ENCODE measurements at regions of chr1 and their contacts with region 1.

Region 1: DNA sequence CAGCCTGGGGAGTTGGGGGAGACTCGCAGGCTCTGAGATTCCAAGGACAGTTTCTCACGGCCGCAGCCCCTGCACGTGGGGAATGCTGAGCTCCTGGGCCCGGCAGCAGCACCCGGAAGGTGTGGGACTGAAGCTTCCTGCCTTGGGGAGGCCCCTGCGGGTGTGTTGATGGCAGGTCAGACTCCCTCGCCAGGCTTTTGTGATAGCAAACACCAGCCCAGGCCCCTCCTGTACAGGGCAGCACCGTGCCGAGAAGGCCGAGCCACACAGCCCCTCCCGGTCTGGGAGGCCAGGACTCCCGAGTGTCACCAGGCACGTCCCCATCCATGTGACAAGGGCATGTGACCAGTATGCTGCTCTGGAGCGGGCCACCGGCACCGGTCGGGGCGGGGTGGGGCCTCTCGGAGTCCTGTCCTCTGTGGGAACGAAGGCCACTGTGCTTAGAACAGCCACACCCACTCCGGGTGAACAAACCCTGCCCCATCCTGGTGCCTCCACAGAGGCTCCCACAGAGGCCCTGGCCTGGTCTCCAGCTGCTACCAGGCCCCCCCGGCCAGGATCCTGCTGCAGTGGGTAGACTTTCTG is 31.1 kb upstream of the ARHGEF16 start:
- DNase-seq: peak; percentile 3
- H3K4me3 Mint-ChIP-seq: no peak overlapping the region
- H3K27ac Mint-ChIP-seq: no peak overlapping the region
- H3K4me1 Mint-ChIP-seq: no peaks in the 10 kb centered on the region
- H3K27me3 Mint-ChIP-seq: peaks cover 48% of the 10 kb centered on the region
- CTCF ChIP-seq: no peak

Region 2: GRCh38 chr1:3012456-3013291 is 410.7 kb before region 1 on chr1:
- CTCF ChIA-PET with region 1: no interaction called
- intact Hi-C with region 1: loop called (anchors 5 kb)
- DNase-seq: peak; percentile 55
- H3K4me3 Mint-ChIP-seq: no peak overlapping the region
- H3K27ac Mint-ChIP-seq: no peak overlapping the region
- H3K4me1 Mint-ChIP-seq: no peaks in the 10 kb centered on the region
- H3K27me3 Mint-ChIP-seq: peaks cover 51% of the 10 kb centered on the region
- CTCF ChIP-seq: peak; percentile 45

Region 3: DNA sequence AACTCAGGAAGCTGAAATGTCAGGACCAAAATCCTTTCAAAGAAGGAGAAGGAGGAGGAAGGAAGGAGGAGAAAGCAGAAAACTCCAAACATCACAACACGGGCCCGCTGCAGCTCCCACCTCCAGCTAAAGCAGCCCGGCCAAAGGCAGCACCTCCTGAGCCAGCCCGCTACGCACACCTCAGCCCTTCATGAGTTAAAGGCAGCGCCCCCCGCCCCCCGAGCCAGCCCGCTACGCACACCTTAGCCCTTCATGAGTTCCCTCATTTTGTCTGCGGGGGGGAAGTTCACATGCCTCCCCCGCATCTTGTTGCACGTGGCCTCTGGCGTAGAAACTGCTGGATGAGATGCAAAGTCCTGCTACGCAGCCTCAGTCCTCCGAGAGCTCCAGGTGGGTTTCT is 59.6 kb before region 1 on chr1:
- CTCF ChIA-PET with region 1: interaction called, 11 read pairs
- intact Hi-C with region 1: no loop called
- DNase-seq: no peak
- H3K4me3 Mint-ChIP-seq: no peak overlapping the region
- H3K27ac Mint-ChIP-seq: no peak overlapping the region
- H3K4me1 Mint-ChIP-seq: no peaks in the 10 kb centered on the region
- H3K27me3 Mint-ChIP-seq: peaks cover 70% of the 10 kb centered on the region
- CTCF ChIP-seq: no peak